ENCODE measurements at regions of chr4 and their contacts with region 1.

Region 1: DNA sequence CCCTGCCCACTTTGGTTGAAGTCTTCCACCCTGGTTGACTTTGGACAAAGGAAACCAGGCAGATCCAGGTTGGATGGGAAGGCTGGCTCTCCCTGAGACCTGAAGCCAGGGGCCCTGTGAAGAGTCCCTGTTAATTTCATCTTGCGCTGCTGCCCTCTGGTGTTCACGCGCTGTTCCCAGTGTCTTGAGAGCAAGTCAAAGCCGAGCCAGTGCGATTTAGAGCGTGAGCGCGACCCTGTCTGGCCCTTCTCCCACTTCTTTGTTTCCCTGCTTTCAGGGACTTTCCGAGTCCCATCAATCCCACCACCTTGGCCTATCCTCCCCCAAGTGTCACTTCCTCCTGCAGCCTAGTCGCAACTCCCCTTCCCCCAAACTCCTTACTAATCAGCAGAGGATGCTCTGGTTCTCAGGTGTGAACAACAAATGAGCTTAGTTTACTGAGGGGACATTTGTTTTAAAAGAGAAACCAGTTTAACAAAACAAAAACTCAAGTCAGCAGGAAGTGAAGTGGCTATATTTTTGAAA is 25.8 kb upstream of the CHRNA9 start:
- DNase-seq: peak; percentile 94
- H3K4me3 Mint-ChIP-seq: peak overlapping the region; percentile 54
- H3K27ac Mint-ChIP-seq: peak overlapping the region; percentile 80
- H3K4me1 Mint-ChIP-seq: peaks cover 72% of the 10 kb centered on the region
- H3K27me3 Mint-ChIP-seq: no peaks in the 10 kb centered on the region

Region 2: DNA sequence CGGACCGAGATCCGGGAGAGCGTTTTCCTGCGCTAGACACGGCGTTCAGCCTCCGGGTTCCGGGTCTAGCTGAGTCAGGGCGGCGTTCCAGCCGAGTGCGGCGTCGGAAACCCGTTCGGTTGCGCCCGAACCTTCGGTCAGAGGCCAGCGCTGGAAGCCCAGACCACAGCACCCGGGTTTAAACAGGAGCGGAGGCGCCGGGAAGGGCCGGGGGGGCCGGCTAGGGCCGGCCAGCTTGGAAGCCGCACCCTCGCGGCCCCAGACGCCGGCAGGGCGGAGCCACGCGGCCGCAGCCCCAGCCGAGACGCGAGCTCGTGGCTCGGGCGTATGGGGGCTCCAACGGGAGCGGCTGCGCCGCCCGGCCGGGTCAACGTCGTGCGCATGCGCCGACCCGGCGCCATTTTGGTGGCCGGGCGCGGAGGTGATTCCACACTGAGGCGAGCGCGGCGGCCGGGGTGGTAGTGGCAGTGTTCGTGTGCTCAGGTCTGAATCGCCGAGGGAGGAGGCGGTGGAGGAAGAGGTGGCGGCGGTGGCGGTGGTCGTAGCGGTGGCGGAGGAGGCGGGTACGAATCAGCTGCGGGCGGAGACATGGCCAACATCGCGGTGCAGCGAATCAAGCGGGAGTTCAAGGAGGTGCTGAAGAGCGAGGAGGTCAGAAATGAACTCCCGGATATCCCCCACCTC is 611.4 kb before region 1 on chr4 and contains the start of gene UBE2K:
- CTCF ChIA-PET with region 1: no interaction called
- POLR2A ChIA-PET with region 1: no interaction called
- intact Hi-C with region 1: loop called (anchors 5 kb)
- DNase-seq: peak; percentile 92
- H3K4me3 Mint-ChIP-seq: peak within 1 kb of the TSS; percentile 96
- H3K27ac Mint-ChIP-seq: peak within 1 kb of the TSS; percentile 96
- H3K4me1 Mint-ChIP-seq: peaks cover 36% of the 10 kb centered on the region
- H3K27me3 Mint-ChIP-seq: no peaks in the 10 kb centered on the region
- total RNA-seq, gene UBE2K: 81.4 to 83.5 TPM

Region 3: GRCh38 chr4:39855909-39856512 is 453.3 kb before region 1 on chr4:
- CTCF ChIA-PET with region 1: no interaction called
- POLR2A ChIA-PET with region 1: no interaction called
- intact Hi-C with region 1: no loop called
- DNase-seq: no peak
- H3K4me3 Mint-ChIP-seq: no peak overlapping the region
- H3K27ac Mint-ChIP-seq: no peak overlapping the region
- H3K4me1 Mint-ChIP-seq: peaks cover 11% of the 10 kb centered on the region
- H3K27me3 Mint-ChIP-seq: no peaks in the 10 kb centered on the region

Region 4: GRCh38 chr4:40149960-40150385 is 159.3 kb before region 1 on chr4:
- CTCF ChIA-PET with region 1: interaction called, 15 read pairs
- POLR2A ChIA-PET with region 1: no interaction called
- intact Hi-C with region 1: loop called (anchors 1 kb)
- DNase-seq: peak; percentile 74
- H3K4me3 Mint-ChIP-seq: no peak overlapping the region
- H3K27ac Mint-ChIP-seq: no peak overlapping the region
- H3K4me1 Mint-ChIP-seq: peaks cover 27% of the 10 kb centered on the region
- H3K27me3 Mint-ChIP-seq: no peaks in the 10 kb centered on the region

Region 5: DNA sequence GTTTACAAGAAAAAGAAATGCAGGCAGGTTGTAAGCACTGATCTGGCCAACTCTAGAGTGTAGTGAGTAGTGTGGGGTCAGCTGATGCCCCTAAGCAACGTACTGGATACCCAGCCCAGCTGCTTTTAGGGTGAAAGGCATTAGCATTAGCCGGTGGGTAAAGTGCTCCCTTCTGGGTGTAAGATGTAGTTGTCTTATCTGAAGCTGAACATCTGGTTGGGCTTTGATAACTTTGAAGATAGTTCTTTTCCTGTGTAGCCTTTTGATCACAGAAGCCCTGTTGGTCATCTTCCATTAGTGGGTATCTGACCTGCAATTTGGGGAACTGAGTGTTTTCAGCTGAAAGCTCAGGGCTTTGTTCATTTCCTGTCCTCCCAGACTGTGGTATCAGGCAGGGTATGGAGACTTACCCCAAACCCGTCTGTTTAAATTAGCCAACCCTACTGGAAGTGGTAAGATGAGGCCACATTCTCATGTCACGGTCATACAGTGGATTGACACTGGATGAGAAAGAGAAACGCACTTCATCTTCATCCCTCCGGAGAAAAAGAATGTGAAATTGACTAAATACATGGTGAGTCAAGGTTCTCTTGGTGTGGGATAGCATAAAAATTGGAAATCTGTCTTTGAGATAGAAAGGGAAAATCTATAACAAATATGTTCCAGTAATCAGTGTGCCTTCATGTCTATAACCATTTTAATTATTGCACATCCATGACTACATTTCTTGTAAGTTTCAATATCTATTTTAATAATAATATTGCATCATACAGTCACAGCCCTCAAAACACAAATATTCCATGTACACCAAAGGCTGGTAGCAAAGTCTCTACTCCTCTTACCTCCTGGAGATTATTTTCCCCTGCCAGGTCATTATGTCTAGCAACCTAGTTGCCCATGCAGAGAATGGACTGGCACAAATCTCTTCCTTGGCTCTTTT is 103.8 kb before region 1 on chr4:
- CTCF ChIA-PET with region 1: interaction called, 18 read pairs
- POLR2A ChIA-PET with region 1: interaction called, 57 read pairs
- intact Hi-C with region 1: loop called (anchors 1 kb)
- DNase-seq: peak; percentile 69
- H3K4me3 Mint-ChIP-seq: peak overlapping the region; percentile 93
- H3K27ac Mint-ChIP-seq: peak overlapping the region; percentile 98
- H3K4me1 Mint-ChIP-seq: peaks cover 61% of the 10 kb centered on the region
- H3K27me3 Mint-ChIP-seq: no peaks in the 10 kb centered on the region

Region 6: GRCh38 chr4:40238700-40239548 is 70.4 kb before region 1 on chr4:
- CTCF ChIA-PET with region 1: interaction called, 70 read pairs
- POLR2A ChIA-PET with region 1: interaction called, 8 read pairs
- intact Hi-C with region 1: loop called (anchors 1 kb)
- DNase-seq: peak; percentile 91
- H3K4me3 Mint-ChIP-seq: peak overlapping the region; percentile 75
- H3K27ac Mint-ChIP-seq: peak overlapping the region; percentile 96
- H3K4me1 Mint-ChIP-seq: peaks cover 88% of the 10 kb centered on the region
- H3K27me3 Mint-ChIP-seq: no peaks in the 10 kb centered on the region

Region 7: DNA sequence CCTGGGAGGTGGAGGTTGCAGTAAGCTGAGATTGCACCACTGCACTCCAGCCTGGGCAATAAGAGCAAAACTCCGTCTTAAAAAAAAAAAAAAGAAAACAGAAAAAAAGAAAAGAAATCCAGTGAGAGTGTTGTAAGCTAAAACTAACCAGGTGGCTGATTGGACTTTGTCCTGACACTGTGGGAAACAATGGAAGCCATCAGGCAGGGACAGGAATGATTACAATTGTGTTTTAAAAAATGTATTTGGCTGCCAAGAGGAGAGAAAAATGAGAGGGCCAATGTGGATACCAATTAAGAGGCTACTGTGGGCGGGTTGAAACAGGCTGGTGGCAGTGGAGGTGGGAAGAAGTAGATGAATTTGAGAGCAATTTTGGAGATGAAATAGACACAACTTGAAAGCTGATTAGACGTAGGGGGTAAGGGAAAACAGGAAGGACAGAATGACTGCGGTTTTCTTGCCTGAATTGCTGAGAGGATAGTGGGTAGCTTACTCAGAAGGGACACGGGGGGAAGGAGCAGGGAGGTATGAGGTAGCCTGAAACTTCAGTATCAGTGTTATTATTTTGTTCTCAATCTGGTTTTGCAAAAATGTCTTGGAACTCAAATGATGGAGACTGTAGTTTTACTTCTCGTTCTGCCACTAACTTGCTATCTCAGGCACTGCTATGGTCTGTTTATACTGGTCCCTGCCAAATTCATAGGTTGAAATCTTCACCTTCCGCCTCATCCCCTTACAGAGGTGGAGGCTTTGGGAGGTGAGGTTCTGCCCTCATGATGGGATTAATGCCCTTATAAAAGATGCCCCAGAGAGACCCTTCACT is 19.7 kb before region 1 on chr4:
- CTCF ChIA-PET with region 1: interaction called, 18 read pairs
- POLR2A ChIA-PET with region 1: interaction called, 5 read pairs
- intact Hi-C with region 1: loop called (anchors 1 kb)
- DNase-seq: peak; percentile 59
- H3K4me3 Mint-ChIP-seq: peak overlapping the region; percentile 44
- H3K27ac Mint-ChIP-seq: peak overlapping the region; percentile 86
- H3K4me1 Mint-ChIP-seq: peaks cover 54% of the 10 kb centered on the region
- H3K27me3 Mint-ChIP-seq: no peaks in the 10 kb centered on the region